ENCODE measurements at regions of chr1 and their contacts with region 1.

Region 1: GRCh38 chr1:232353001-232353400 is 276.9 kb downstream of the SIPA1L2 start:
- DNase-seq: no peak
- H3K4me3 ChIP-seq: no peak overlapping the region
- H3K27ac ChIP-seq: no peak overlapping the region
- H3K4me1 ChIP-seq: no peaks in the 10 kb centered on the region
- H3K27me3 ChIP-seq: peaks cover 2% of the 10 kb centered on the region
- CTCF ChIP-seq: no peak

Region 2: DNA sequence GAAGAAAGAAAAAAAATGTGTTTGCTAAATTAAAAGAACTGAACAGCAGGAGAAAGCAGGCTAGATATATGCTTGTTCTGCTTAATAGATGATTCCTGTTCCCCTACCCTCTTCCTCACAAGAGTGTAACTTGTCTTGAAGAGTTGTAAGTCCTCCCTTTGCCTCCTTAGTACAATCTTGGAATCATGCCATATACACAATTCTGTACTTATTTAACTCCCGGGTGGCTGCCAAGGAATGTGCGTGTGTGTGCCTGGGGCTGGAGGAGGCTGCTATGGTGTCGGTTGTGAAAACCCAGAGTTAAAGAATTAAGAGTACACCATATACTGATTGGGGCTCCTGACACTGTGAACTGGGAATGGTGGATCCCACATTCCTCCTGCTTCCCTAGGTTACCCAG is 82.7 kb after region 1 on chr1:
- CTCF ChIA-PET with region 1: no interaction called
- POLR2A ChIA-PET with region 1: interaction called, 12 read pairs
- intact Hi-C with region 1: no loop called
- DNase-seq: peak; percentile 62
- H3K4me3 ChIP-seq: no peak overlapping the region
- H3K27ac ChIP-seq: no peak overlapping the region
- H3K4me1 ChIP-seq: peaks cover 38% of the 10 kb centered on the region
- H3K27me3 ChIP-seq: no peaks in the 10 kb centered on the region
- CTCF ChIP-seq: no peak

Measured in A673 (cell line).